WTC11 (cell line): ENCODE measurements at regions of chr13 and their contacts with region 1.

Region 1: DNA sequence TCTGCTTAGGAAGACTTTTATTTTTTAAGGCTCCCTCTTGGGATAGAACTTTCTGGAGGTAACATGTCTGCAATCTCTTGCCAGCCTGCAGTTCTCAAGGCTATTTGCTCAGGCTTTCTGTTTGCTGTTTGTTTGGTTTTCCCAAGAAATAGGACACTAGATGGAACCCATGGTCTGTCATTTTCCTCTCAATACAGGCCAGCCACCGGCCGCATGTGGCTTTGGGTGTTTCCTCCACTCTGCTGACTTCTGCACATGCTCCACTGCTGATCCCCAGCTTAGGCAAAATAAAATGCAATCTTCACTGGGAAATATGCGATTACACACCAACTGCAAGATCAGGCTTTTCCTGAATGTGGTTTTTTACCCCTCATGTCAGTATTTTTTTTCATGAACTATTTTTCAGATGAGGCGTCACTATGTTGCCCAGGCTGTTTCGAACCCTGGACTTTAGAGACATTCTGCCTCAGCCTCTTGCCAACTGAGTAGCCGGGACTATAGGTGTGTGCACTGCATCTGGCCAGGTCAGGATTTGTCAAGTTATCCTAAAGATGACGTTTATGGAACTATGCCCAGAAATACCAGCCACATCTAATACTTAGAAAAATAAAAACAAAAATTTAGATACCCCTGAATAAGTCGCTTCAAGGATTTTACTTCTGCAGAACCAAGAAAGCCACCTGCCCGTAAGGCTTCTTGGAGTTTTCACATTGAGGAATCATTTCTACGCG is 94.3 kb upstream of the PABPC3 start:
- DNase-seq: no peak
- ATAC-seq: no peak
- H3K4me3 Mint-ChIP-seq: no peak overlapping the region
- H3K27ac Mint-ChIP-seq: no peak overlapping the region
- H3K4me1 Mint-ChIP-seq: peaks cover 19% of the 10 kb centered on the region
- H3K27me3 Mint-ChIP-seq: no peaks in the 10 kb centered on the region
- CTCF ChIP-seq: no peak

Region 2: GRCh38 chr13:25037057-25037813 is 35.6 kb after region 1 on chr13:
- CTCF ChIA-PET with region 1: interaction called, 28 read pairs
- POLR2A ChIA-PET with region 1: no interaction called
- DNase-seq: peak; percentile 55
- ATAC-seq: peak; percentile 91
- H3K4me3 Mint-ChIP-seq: no peak overlapping the region
- H3K27ac Mint-ChIP-seq: no peak overlapping the region
- H3K4me1 Mint-ChIP-seq: peaks cover 2% of the 10 kb centered on the region
- H3K27me3 Mint-ChIP-seq: no peaks in the 10 kb centered on the region
- CTCF ChIP-seq: peak; percentile 69

Region 3: DNA sequence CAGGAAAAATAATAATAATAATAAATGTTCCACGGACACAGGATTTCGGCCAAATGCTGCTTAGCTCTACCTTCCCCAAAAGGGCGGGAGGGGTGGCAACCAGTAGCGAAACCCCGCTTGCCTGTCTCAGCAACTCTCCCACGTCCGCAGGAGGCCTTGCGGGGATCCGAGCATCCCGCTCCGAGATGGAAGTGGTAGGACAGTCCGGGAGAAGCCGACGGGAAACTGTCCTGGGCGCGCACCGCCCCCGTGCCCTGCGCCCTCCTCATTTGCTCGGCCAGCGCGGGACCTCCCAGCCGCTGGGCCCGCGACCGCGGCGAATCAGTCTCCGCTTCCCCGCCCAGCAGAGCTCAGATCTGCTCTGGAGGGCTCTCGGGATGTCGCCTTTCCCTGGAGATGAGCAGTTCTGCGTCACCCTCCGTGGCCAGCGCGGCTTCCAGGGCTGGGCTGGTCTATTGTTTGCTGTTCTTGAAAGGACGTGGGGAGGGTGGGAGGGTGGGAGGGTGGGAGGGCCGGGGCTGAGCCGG is 45.4 kb after region 1 on chr13:
- CTCF ChIA-PET with region 1: interaction called, 10 read pairs
- POLR2A ChIA-PET with region 1: no interaction called
- DNase-seq: peak; percentile 73
- ATAC-seq: peak; percentile 90
- H3K4me3 Mint-ChIP-seq: peak overlapping the region; percentile 77
- H3K27ac Mint-ChIP-seq: no peak overlapping the region
- H3K4me1 Mint-ChIP-seq: peaks cover 35% of the 10 kb centered on the region
- H3K27me3 Mint-ChIP-seq: peaks cover 21% of the 10 kb centered on the region
- CTCF ChIP-seq: no peak

Region 4: GRCh38 chr13:25114220-25114619 is 112.6 kb after region 1 on chr13:
- CTCF ChIA-PET with region 1: interaction called, 37 read pairs
- POLR2A ChIA-PET with region 1: no interaction called
- DNase-seq: peak; percentile 88
- ATAC-seq: peak; percentile 87
- H3K4me3 Mint-ChIP-seq: no peak overlapping the region
- H3K27ac Mint-ChIP-seq: no peak overlapping the region
- H3K4me1 Mint-ChIP-seq: peaks cover 50% of the 10 kb centered on the region
- H3K27me3 Mint-ChIP-seq: peaks cover 14% of the 10 kb centered on the region
- CTCF ChIP-seq: peak; percentile 73